Activated CD8-positive, alpha-beta T cell treated with anti-CD3 and anti-CD28 coated beads, Interleukin-2, amount 10 ng/mL, durations not matched to agents 7 days and 5 days (primary cell): ENCODE measurements at regions of chr1 and their contacts with region 1.

Region 1: GRCh38 chr1:12472798-12473551 is 145.0 kb downstream of the DHRS3 start:
- DNase-seq: peak; percentile 81
- ATAC-seq: peak; percentile 79
- H3K4me3 Mint-ChIP-seq: peak overlapping the region; percentile 68
- H3K27ac Mint-ChIP-seq: peak overlapping the region; percentile 90
- H3K4me1 Mint-ChIP-seq: peaks cover 88% of the 10 kb centered on the region
- H3K27me3 Mint-ChIP-seq: no peaks in the 10 kb centered on the region

Region 2: DNA sequence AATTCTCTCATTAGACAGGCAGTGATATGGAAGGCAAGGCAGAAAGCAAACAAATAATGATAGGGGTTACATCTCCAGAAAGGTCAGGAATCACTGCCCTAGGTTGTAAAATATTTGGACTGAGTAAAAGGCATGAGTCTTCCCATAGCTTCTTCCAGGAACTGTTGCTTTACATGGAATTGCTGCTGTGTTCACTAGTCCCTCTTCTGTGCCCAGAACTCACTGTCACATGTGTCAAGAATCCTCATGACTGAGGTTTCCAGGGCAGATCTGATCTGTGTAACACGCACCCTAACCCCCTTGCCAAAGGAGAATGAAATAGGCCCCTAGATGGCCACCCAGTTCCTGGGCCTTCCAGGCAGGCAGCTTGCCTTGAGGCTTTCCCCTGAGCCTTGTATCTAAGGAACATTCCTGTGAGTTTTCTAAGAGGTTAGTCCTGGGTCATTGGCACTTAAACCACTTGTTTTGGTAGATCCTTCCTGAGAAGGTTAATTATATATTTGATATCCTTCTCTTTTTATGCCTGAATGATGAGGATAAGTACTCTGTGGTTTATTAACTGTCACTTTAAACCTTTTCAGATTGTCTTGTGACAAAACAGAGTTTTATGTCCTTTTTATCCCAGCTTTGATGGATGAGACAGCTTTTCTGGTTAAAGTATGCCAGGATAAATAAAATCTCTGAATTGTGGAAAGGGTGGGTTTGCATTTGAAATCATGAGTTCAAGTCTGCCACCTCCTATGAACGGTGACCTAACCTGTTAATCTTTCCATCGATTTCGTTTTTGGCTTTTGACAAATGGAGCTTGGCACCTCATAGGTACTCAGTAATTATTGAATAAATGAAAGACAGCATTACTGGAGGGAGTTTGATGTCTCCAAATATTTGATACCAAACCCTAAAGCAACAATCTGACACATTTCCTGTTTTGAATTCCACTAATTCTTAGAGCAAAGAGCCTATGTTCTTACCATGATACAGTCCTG is 18.3 kb before region 1 on chr1:
- CTCF ChIA-PET with region 1: interaction called, 9 read pairs
- POLR2A ChIA-PET with region 1: interaction called, 19 read pairs
- DNase-seq: no peak
- ATAC-seq: no peak
- H3K4me3 Mint-ChIP-seq: no peak overlapping the region
- H3K27ac Mint-ChIP-seq: peak overlapping the region; percentile 86
- H3K4me1 Mint-ChIP-seq: peaks cover 88% of the 10 kb centered on the region
- H3K27me3 Mint-ChIP-seq: no peaks in the 10 kb centered on the region

Region 3: DNA sequence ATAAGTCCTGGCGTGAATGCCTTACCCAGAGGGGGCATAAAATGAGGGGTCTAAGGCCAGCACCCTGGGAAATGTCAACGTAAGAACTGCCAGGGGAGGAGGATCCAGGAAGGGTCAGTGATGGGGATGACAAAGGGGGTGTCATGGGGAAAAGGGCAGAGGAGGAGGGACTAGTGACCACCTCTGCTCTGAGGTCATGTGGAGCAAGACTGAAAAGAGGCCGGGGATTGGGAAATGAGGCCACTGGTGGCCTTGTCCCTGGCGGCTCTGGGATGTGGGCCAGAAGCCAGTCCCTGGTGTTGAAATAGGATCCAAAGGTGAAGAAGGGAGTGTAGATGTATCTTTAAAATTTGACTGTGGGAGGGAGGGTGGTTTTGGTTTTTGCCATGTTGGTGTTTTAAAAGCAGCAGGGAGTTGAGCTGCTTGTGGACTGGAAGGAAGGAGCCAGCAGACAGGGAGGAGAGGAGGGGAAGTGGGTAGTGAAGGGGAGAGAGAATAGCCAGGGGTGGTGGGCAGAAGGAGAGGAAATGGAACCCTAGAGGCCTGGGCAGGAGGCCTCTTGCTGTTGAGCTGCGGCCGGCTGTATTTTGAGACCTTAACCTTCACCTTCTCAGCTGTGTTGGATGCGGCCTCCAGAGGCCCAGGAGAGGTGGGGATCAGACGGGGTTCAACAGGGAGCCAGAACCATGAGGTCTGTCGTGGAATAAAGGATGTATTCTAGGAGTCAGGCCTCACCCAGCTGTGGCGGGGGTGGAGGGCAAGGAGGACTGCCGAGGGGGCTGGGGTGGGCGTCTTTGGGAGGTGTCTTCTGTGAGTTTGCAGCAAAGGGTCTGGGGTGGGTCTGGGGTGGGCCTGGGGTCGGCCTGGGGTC is 52.6 kb after region 1 on chr1:
- CTCF ChIA-PET with region 1: no interaction called
- POLR2A ChIA-PET with region 1: no interaction called
- DNase-seq: no peak
- ATAC-seq: no peak
- H3K4me3 Mint-ChIP-seq: no peak overlapping the region
- H3K27ac Mint-ChIP-seq: peak overlapping the region; percentile 75
- H3K4me1 Mint-ChIP-seq: peaks cover 21% of the 10 kb centered on the region
- H3K27me3 Mint-ChIP-seq: no peaks in the 10 kb centered on the region

Region 4: DNA sequence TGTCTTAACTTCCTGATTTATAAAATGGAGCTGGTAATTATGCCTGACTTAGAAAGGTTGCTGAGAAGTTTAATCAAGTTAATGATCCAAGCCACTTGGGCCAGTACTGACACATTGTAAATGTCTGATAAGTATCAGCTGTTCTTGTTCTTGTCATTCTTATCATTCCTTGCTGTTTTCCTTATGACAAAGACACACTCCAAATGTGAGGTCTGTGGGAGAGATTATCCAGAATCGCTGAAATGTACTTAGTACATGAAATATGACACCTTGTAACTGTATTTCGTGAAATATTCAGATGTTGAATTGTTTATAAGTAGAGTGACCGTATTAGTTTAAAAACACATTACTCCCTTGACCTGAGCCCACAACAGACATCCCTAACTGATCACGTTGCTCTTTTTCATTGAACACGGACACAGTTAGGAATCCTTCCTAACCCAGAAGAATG is 177.0 kb after region 1 on chr1:
- CTCF ChIA-PET with region 1: no interaction called
- POLR2A ChIA-PET with region 1: no interaction called
- DNase-seq: no peak
- ATAC-seq: no peak
- H3K4me3 Mint-ChIP-seq: no peak overlapping the region
- H3K27ac Mint-ChIP-seq: no peak overlapping the region
- H3K4me1 Mint-ChIP-seq: no peaks in the 10 kb centered on the region
- H3K27me3 Mint-ChIP-seq: peaks cover 2% of the 10 kb centered on the region